ENCODE measurements at regions of chr5 and their contacts with region 1.

Region 1: DNA sequence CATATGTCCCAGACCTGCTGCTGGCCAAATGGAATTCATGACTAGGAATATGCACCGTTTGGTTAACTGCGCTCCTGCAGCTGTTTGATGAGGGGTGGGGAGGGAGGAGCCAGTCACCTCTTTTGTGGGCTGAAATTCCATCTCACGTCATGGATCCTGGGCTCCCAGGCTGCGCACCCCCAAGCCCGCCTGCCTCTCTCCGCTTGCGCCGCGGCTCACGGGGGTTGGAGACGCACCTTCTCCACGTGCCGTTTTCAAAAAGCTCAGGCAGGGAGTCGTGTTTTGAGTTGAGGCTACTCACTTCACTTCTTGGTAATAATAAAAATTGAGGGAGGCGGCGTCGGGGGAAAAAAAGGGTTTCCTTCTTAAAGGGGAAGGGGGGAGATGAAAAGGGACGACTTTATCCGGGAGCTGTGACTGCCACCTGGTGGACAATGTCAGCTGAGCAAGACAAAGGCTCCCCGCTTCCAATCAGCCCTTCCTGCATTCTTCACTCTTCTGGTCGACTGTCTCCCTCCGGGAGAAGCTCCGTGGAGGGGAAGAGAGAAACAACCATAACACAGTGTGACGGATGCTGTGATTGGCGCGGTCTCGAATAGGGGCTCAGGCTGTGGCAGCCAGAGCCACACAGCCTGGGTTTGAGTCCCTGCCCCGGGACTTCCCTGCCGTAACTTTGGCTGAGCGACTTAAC is 15.9 kb upstream of the C5orf47 start:
- DNase-seq: peak; percentile 43 to 84 (median 79)
- ATAC-seq: peak; percentile 86
- H3K4me3 ChIP-seq: peak overlapping the region; percentile 25 to 46
- H3K4me3 Mint-ChIP-seq: peak overlapping the region; percentile 79
- H3K27ac ChIP-seq: no peak overlapping the region
- H3K27ac Mint-ChIP-seq: no peak overlapping the region
- H3K4me1 ChIP-seq: peaks cover 5% of the 10 kb centered on the region
- H3K4me1 Mint-ChIP-seq: peaks cover 12% of the 10 kb centered on the region
- H3K27me3 ChIP-seq: no peaks in the 10 kb centered on the region
- H3K27me3 Mint-ChIP-seq: peaks cover 22% of the 10 kb centered on the region
- CTCF ChIP-seq: peak; percentile 77

Region 2: GRCh38 chr5:173293817-173294672 is 679.0 kb before region 1 on chr5:
- CTCF ChIA-PET with region 1: interaction called, 10 read pairs
- POLR2A ChIA-PET with region 1: no interaction called
- intact Hi-C with region 1: loop called in 1 of 2 experiments (anchors 1 kb)
- DNase-seq: peak; percentile 33 to 78 (median 59)
- ATAC-seq: peak; percentile 69
- H3K4me3 ChIP-seq: peak overlapping the region; percentile 4 to 27
- H3K4me3 Mint-ChIP-seq: peak overlapping the region; percentile 30
- H3K27ac ChIP-seq: no peak overlapping the region
- H3K27ac Mint-ChIP-seq: no peak overlapping the region
- H3K4me1 ChIP-seq: peaks cover 12% of the 10 kb centered on the region
- H3K4me1 Mint-ChIP-seq: peaks cover 13% of the 10 kb centered on the region
- H3K27me3 ChIP-seq: peaks cover 0 to 5% of the 10 kb centered on the region in 2 experiments
- H3K27me3 Mint-ChIP-seq: peaks cover 30% of the 10 kb centered on the region
- CTCF ChIP-seq: peak; percentile 64

Region 3: GRCh38 chr5:173615884-173616576 is 357.0 kb before region 1 on chr5:
- CTCF ChIA-PET with region 1: interaction called, 88 read pairs
- POLR2A ChIA-PET with region 1: interaction called, 8 read pairs
- intact Hi-C with region 1: loop called (anchors 1 kb)
- DNase-seq: peak; percentile 41 to 88 (median 70)
- ATAC-seq: peak; percentile 60
- H3K4me3 ChIP-seq: peak overlapping the region; percentile 81 to 89
- H3K4me3 Mint-ChIP-seq: peak overlapping the region; percentile 95
- H3K27ac ChIP-seq: peak overlapping the region; percentile 85 to 91
- H3K27ac Mint-ChIP-seq: peak overlapping the region; percentile 97
- H3K4me1 ChIP-seq: peaks cover 34% of the 10 kb centered on the region
- H3K4me1 Mint-ChIP-seq: peaks cover 52% of the 10 kb centered on the region
- H3K27me3 ChIP-seq: no peaks in the 10 kb centered on the region
- H3K27me3 Mint-ChIP-seq: no peaks in the 10 kb centered on the region
- CTCF ChIP-seq: peak; percentile 73

Region 4: GRCh38 chr5:173629628-173630027 is 343.4 kb before region 1 on chr5:
- CTCF ChIA-PET with region 1: interaction called, 28 read pairs
- POLR2A ChIA-PET with region 1: no interaction called
- intact Hi-C with region 1: no loop called
- DNase-seq: no peak
- ATAC-seq: no peak
- H3K4me3 ChIP-seq: no peak overlapping the region
- H3K4me3 Mint-ChIP-seq: no peak overlapping the region
- H3K27ac ChIP-seq: no peak overlapping the region
- H3K27ac Mint-ChIP-seq: no peak overlapping the region
- H3K4me1 ChIP-seq: no peaks in the 10 kb centered on the region
- H3K4me1 Mint-ChIP-seq: no peaks in the 10 kb centered on the region
- H3K27me3 ChIP-seq: no peaks in the 10 kb centered on the region
- H3K27me3 Mint-ChIP-seq: peaks cover 14% of the 10 kb centered on the region
- CTCF ChIP-seq: no peak

Region 5: DNA sequence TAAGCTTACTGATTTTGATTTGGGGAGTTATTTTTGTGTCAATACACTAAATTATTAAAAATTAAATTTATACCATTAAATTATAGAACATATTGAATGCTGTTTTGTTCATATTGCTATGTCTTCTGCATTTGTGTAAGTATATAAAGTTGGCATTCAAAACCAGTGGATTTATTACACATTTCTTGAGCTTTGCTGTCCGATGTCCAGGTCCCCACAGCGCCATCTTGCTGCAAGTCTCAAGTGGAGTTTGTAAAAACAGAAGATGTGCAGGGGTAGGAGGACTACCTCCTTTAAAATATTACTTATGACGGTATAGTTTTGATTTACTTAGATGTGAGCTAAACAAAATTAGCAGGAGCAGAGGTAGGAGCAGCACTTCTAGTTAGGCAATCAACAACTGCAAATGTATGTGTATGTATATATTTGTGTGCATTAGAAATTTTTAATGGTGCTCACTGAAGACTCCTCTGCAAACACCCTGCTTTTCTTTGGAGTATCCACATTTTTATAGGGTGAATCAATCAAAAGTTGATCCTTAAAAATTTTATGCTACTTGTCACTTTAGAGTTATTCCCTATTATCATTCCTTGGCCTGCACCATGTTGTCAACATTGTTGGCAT is 47.5 kb before region 1 on chr5:
- CTCF ChIA-PET with region 1: interaction called, 3 read pairs
- POLR2A ChIA-PET with region 1: no interaction called
- intact Hi-C with region 1: loop called in 1 of 2 experiments (anchors 1 kb)
- DNase-seq: peak; percentile 6 to 69 (median 48)
- ATAC-seq: peak; percentile 38
- H3K4me3 ChIP-seq: no peak overlapping the region
- H3K4me3 Mint-ChIP-seq: no peak overlapping the region
- H3K27ac ChIP-seq: no peak overlapping the region
- H3K27ac Mint-ChIP-seq: no peak overlapping the region
- H3K4me1 ChIP-seq: no peaks in the 10 kb centered on the region
- H3K4me1 Mint-ChIP-seq: peaks cover 36% of the 10 kb centered on the region
- H3K27me3 ChIP-seq: no peaks in the 10 kb centered on the region
- H3K27me3 Mint-ChIP-seq: no peaks in the 10 kb centered on the region
- CTCF ChIP-seq: peak; percentile 51

Measured in CD8-positive, alpha-beta T cell (primary cell).